Activated B cell treated with CpG ODN at 0.5 μM for 24 hours (primary cell): ENCODE measurements at regions of chr20 and their contacts with region 1.

Region 1: DNA sequence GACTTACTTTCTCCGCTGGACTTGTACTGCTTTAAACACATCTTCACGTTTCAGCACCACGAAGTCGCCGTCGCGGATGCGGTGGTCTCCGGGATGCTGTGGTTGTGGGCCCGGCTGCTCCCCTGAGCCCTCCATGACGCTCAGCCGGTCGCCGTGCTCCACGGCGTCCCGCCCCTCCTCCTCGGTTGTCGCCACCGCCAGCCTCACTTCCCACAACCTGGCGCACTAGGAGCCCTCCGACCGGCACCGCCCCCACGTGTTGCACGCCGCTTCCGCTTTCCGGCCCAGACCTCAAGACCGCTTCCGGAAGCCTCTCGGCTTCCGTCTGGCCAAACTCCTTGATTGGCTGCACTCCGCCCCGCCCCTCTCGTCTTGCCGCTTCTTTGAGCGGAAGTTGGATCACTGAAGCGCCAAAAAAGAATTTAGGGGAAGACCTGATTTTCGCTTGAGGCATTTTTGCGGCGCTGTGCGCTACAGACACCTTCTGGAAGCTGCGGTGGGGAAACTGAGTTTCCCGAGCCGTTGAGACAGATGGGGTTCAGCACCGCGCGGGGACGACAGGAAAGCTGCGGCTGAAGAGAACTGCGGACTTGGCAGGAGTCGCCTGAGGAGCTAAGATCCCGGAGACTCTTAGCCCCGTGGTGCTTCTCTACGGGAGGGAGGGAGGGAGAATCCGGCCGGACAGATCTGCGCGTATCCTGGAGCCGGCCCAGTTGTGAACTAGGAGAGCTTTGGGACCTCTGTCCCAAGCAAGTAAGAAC is at the starts of genes MCM8 and TRMT6:
- DNase-seq: peak; percentile 94
- ATAC-seq: peak; percentile 97
- H3K4me3 Mint-ChIP-seq: peak within 1 kb of the TSS; percentile 93
- H3K27ac Mint-ChIP-seq: peak within 1 kb of the TSS; percentile 90
- H3K4me1 Mint-ChIP-seq: peaks cover 34% of the 10 kb centered on the region
- H3K27me3 Mint-ChIP-seq: no peaks in the 10 kb centered on the region
- CTCF ChIP-seq: no peak
- total RNA-seq, gene MCM8: 12.9 and 13.0 TPM in 2 replicates
- total RNA-seq, gene TRMT6: 21.0 and 25.5 TPM in 2 replicates

Region 2: GRCh38 chr20:5126512-5127203 is 823.8 kb before region 1 on chr20 and contains the start of gene CDS2:
- CTCF ChIA-PET with region 1: no interaction called
- POLR2A ChIA-PET with region 1: no interaction called
- intact Hi-C with region 1: loop called (anchors 5 kb)
- DNase-seq: peak; percentile 99
- ATAC-seq: peak; percentile 87
- H3K4me3 Mint-ChIP-seq: peak within 1 kb of the TSS; percentile 87
- H3K27ac Mint-ChIP-seq: peak within 1 kb of the TSS; percentile 90
- H3K4me1 Mint-ChIP-seq: peaks cover 33% of the 10 kb centered on the region
- H3K27me3 Mint-ChIP-seq: no peaks in the 10 kb centered on the region
- CTCF ChIP-seq: no peak
- total RNA-seq, gene CDS2: 32.4 and 37.4 TPM in 2 replicates

Region 3: DNA sequence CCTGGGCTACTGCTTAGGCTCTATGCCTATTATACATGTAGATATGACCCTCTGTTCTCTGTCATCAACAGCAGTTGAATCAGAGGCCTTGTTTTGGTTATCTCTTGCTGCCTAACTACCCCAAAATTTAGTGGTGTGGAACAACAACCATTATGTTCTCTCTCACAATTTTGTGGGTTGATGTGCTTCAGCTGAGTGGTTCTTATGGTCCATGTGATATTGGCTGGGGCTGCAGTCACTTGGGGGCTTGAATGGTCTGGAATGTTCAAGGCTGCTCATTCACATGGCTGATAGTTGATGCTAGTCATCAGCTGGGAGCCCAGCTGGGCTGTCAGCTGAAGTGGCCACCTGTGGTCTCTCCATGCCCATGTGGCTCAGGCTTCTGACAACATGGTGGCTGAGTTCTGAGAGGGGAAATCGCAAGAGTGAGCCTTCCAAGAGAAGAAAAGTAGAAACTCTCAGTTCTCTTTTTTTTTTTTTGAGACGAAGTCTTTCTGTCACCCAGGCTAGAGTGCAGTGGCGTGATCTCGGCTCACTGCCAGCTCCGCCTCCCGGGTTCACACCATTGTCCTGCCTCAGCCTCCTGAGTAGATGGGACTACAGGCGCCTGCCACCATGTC is 152.5 kb before region 1 on chr20:
- CTCF ChIA-PET with region 1: no interaction called
- POLR2A ChIA-PET with region 1: no interaction called
- intact Hi-C with region 1: loop called (anchors 1 kb)
- DNase-seq: peak; percentile 57
- ATAC-seq: peak; percentile 87
- H3K4me3 Mint-ChIP-seq: peak overlapping the region; percentile 63
- H3K27ac Mint-ChIP-seq: peak overlapping the region; percentile 100
- H3K4me1 Mint-ChIP-seq: peaks cover 29% of the 10 kb centered on the region
- H3K27me3 Mint-ChIP-seq: no peaks in the 10 kb centered on the region
- CTCF ChIP-seq: no peak

Region 4: DNA sequence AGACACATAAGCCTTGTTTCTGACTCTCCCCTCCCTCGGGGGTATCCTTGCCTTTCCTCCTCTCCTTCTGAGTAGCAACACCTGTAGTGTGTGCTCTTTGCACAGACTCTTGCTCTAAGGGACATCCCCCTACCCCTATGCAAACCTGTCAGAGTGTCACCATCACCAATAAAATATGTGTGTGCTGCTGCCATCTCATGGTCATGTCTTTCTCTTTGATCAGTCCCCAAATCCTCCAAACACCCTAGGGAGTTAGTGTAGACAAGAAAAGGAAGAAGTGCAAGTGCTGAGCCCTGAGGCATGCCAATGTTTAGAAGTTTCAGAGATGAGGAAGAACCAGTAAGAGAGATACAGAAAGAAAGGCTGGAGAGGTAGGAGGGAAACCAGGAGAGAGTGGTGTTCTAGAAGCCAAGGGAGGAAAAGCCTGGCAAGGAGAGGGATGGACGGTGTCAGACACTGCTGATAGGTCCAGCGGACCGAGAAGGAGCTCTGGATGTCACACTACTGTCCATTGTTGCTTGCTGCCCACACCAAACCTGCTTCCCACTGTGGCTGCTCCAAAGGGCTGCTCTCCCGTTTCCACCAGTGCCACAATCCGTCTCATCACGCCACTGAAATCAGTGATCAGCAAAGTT is 16.5 kb before region 1 on chr20:
- CTCF ChIA-PET with region 1: no interaction called
- POLR2A ChIA-PET with region 1: no interaction called
- intact Hi-C with region 1: loop called (anchors 2 kb)
- DNase-seq: no peak
- ATAC-seq: peak; percentile 83
- H3K4me3 Mint-ChIP-seq: no peak overlapping the region
- H3K27ac Mint-ChIP-seq: no peak overlapping the region
- H3K4me1 Mint-ChIP-seq: peaks cover 6% of the 10 kb centered on the region
- H3K27me3 Mint-ChIP-seq: peaks cover 7% of the 10 kb centered on the region
- CTCF ChIP-seq: no peak